ENCODE measurements at regions of chr9 and their contacts with region 1.

Region 1: GRCh38 chr9:136488247-136489214 is 5.7 kb upstream of the SEC16A start:
- H3K4me3 ChIP-seq: no peak overlapping the region
- H3K27ac ChIP-seq: no peak overlapping the region
- H3K4me1 ChIP-seq: no peaks in the 10 kb centered on the region; the same call in 1 of the 2 replicates
- CTCF ChIP-seq: peak; percentile 91

Region 2: GRCh38 chr9:136502942-136503550 is 14.5 kb after region 1 on chr9:
- CTCF ChIA-PET with region 1: interaction called, 16 read pairs
- POLR2A ChIA-PET with region 1: no interaction called
- H3K4me3 ChIP-seq: no peak overlapping the region
- H3K27ac ChIP-seq: no peak overlapping the region
- H3K4me1 ChIP-seq: no peaks in the 10 kb centered on the region
- CTCF ChIP-seq: no peak; the same call in 1 of the 2 replicates

Region 3: GRCh38 chr9:136631038-136632000 is 142.8 kb after region 1 on chr9:
- CTCF ChIA-PET with region 1: interaction called, 360 read pairs
- POLR2A ChIA-PET with region 1: interaction called, 7 read pairs
- H3K4me3 ChIP-seq: no peak overlapping the region
- H3K27ac ChIP-seq: no peak overlapping the region
- H3K4me1 ChIP-seq: no peaks in the 10 kb centered on the region; the same call in 1 of the 2 replicates
- CTCF ChIP-seq: peak; percentile 99

Region 4: DNA sequence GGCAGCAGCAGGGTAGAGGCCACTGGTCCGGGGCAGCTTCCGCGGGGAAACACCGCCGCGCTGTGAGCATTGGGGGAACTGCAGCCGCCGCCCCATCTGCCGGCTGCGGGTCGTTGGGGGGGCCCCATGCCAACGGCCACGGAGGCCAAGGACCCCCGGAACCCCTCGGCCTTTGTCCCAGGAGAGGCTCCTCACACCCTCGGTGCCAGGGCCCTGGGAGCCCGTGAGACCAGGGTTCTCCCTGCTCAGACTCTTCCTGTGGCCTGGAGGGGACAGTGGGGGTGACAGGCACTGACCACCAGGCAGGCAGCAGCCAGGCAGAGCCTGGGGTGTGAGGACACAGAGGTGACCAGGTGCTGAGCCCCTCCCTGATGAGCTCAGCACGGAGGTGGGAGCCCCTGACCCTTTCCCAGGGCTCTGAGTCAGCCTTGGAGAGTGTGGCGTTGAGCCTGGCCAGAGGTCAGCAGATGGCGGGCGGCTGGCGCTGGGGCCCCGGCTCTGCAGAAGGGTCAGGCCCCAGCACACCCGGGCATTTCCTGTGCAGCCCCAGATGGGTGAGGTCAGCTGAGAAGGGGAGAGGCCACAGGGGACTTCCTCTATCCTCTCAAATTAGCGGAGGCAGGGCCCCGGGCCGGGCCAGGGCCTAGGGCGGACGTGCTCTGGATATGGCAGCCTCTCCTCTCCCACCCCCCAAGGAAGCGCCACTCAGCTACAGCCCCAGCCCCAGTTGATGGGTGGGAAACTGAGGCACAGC is 156.2 kb after region 1 on chr9:
- CTCF ChIA-PET with region 1: interaction called, 37 read pairs
- POLR2A ChIA-PET with region 1: interaction called, 3 read pairs
- H3K4me3 ChIP-seq: no peak overlapping the region
- H3K27ac ChIP-seq: no peak overlapping the region
- H3K4me1 ChIP-seq: no peaks in the 10 kb centered on the region
- CTCF ChIP-seq: peak; percentile 91

Region 5: DNA sequence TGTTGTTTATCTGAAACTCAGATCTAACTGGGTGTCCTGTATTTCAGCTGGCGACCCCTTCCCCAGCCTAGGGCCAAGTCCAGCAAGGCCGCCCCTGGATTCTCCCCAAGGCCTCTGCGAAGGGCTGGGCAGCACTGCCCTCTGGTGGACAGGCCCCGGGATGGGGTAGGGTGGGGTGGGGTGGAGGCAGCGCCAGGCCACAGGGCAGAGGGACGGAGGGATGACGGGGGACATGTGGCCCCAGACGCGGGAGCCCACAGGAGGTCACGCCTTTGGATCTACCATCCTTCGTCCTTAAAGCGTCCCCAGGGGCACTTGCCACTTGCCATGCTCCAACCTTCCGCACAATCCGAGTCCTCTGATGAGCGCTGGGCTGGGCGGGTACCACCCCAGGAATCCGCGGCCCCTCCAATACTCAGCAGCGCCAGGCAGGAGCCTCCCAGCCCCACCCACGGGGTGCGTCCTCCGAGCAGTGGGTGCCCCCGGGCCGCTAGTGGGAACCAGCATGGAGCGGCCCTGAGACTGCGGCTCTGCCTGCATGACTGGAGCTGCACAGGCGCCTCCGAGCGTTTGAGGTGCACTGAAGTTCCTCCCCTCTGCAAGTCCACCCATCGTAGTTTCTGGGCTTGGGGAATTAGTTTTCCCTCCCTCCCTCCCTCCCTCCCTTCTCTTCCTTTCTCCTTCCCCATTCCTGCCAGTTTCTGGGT is 205.9 kb after region 1 on chr9:
- CTCF ChIA-PET with region 1: interaction called, 11 read pairs
- POLR2A ChIA-PET with region 1: no interaction called
- H3K4me3 ChIP-seq: no peak overlapping the region
- H3K27ac ChIP-seq: no peak overlapping the region
- H3K4me1 ChIP-seq: no peaks in the 10 kb centered on the region
- CTCF ChIP-seq: peak; percentile 69

Region 6: DNA sequence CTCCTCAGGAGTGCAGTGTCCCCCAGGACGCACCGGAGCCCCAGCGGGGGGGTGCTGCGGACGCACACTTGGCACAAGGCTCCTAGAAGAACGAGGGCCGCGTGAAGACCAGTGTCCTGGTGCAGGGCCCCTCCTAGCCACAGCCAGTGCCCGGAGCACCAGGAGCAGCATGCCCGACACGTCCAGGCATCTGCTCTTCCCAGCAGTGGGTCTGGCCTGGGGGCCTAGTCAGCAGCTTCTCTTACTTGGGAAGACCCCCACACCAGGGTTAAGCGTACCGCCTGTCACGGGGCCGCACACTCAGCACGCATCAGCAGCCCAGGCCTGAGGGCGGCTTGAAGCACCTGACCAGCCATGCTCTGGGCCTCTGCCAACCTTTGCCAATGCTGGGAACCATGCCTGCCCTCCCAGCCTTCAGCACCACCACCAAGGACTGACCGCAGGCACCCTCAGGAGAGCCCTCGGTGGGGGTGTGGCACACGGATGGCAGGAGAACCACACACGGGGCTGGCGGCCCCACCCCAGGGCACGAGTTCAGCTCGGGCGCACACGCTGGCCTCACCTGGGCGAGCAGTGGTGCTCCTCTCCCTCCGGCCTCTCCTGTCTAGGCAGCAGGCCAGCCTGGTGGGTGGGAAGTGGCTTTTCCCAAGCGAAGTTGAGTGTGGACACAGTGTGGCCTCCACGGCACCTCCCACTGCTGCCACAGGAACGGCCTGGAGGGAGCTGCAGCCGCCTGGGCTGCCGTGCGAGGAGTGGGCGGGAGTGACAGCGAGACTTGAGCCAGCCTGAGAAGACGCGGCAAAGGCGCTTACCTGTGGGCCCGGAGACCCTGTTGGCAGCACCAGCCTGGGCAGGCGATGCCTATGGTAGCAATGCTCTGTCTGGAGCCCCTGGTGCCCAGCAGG is 341.7 kb after region 1 on chr9:
- CTCF ChIA-PET with region 1: no interaction called
- POLR2A ChIA-PET with region 1: no interaction called
- H3K4me3 ChIP-seq: no peak overlapping the region
- H3K27ac ChIP-seq: no peak overlapping the region
- H3K4me1 ChIP-seq: no peaks in the 10 kb centered on the region
- CTCF ChIP-seq: no peak

Measured in HEK293 (cell line).